GM10248 (cell line): ENCODE measurements at regions of chr11 and their contacts with region 1.

Region 1: GRCh38 chr11:110337570-110338193 is 41.3 kb upstream of the RDX start:
- DNase-seq: no peak
- CTCF ChIP-seq: no peak

Region 2: DNA sequence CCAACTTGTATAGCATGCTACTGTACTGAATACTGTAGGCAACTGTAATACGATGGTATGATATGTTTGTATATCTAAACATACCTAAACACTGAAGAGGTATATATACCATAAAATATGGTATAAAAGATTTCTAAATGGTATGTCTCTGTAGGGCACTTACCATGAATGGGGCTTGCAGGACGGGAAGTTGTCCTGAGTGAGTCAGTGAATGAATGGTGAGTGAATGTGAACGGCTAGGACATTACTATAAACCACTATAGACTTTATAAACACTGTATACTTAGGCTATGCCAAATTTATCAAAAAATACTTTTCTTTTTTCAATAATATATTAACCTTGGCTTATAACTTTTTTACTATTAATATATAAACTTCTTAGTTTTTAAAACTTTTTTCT is 177.7 kb before region 1 on chr11:
- CTCF ChIA-PET with region 1: no interaction called
- POLR2A ChIA-PET with region 1: no interaction called
- DNase-seq: no peak
- CTCF ChIP-seq: no peak

Region 3: GRCh38 chr11:110349138-110349996 is 11.7 kb after region 1 on chr11:
- CTCF ChIA-PET with region 1: interaction called, 10 read pairs
- POLR2A ChIA-PET with region 1: interaction called, 3 read pairs
- DNase-seq: peak; percentile 64
- CTCF ChIP-seq: peak; percentile 16